Activated CD4-positive, alpha-beta T cell treated with anti-CD3 and anti-CD28 coated beads for 36 hours (primary cell): ENCODE measurements at regions of chr16 and their contacts with region 1.

Region 1: GRCh38 chr16:2980227-2981086 is at the start of gene PKMYT1:
- DNase-seq: peak; percentile 97
- ATAC-seq: peak; percentile 91
- H3K4me3 Mint-ChIP-seq: peak within 1 kb of the TSS; percentile 87
- H3K27ac Mint-ChIP-seq: peak within 1 kb of the TSS; percentile 84
- H3K4me1 Mint-ChIP-seq: peaks cover 6% of the 10 kb centered on the region
- H3K27me3 Mint-ChIP-seq: peaks cover 2% of the 10 kb centered on the region
- total RNA-seq, gene PKMYT1: 101 to 117 TPM

Region 2: DNA sequence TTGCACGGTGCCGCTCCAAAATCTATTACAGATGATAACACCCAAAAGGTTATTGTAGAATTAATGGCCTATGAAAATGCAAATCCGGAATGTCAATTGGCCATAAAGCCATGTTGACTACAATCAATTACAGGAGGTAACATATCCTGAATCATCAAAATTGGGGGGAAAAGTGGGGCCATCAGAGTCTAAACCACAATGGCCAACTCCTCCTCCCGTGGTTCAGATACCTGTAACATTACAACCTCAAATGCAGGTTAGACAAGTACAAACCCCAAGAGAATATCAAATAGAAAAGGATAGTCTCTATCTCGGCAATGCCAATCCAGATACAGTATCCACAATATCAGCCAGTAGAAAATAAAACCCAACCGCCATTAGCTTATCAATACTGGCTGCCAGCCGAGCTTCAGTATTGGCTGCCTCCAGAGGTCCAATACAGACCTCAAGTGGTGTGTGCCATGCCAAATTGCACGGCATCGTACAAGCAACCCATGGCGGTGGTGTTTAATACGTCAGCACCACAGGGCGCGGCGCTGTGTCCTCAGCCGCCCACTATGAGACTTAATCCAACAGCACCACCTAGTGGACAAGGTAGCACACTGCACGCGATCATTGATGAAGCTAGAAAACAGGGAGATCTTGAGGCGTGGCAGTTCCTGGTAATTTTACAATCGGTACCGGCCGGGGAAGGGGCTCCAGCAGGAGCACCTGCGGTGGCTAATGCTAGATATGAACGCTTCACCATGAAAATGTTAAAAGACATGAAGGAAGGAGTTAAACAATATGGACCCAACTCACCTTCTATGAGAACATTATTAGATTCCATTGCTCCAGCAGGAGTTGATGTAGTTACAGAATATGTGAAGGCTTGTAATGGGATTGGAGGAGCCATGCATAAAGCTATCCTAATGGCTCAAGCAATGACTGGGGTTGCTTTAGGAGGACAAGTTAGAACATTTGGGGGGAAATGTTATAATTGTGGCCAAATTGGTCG is 53.5 kb before region 1 on chr16:
- CTCF ChIA-PET with region 1: interaction called, 3 read pairs
- POLR2A ChIA-PET with region 1: no interaction called
- intact Hi-C with region 1: loop called in 1 of 2 experiments (anchors 1 kb)
- DNase-seq: peak; percentile 93
- ATAC-seq: peak; percentile 99
- H3K4me3 Mint-ChIP-seq: no peak overlapping the region
- H3K27ac Mint-ChIP-seq: no peak overlapping the region
- H3K4me1 Mint-ChIP-seq: peaks cover 11% of the 10 kb centered on the region
- H3K27me3 Mint-ChIP-seq: no peaks in the 10 kb centered on the region

Region 3: DNA sequence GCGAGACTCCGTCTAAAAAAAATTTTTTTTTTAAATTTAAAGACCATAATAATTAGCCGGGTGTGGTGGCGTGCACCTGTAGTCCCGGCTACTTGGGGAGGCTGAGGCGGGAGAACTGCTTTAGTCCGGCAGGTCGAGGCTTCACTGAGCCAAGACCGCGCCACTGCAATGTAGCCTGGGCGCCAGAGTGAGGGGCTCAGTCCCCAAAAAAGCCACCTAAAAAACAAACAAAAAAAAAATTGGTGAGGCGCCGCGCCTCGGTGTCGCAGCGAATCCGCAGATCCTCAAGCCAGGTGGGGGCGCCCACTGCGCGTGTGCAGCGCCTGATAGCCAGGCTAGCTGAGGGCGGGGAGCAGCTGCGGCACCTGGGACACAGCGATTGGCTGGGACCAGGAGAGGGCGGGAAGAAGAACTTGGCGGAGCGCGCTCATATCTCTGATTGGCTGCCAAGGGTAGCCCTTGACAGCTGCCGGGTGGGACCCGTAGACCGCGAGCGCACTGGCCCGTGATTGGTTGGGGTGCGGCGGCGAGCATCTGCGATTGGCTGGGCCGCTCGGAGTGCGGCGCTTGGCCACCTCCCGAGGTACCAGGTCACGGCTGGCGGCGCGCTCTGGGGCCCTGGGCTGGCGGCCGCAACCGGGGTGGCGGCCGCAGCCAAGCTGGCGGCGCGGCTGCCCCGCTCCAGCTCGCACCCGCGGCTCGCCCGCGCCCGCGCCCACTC is 23.3 kb after region 1 on chr16:
- CTCF ChIA-PET with region 1: interaction called, 3 read pairs
- POLR2A ChIA-PET with region 1: no interaction called
- intact Hi-C with region 1: loop called in 1 of 2 experiments (anchors 1 kb)
- DNase-seq: peak; percentile 99
- ATAC-seq: peak; percentile 100
- H3K4me3 Mint-ChIP-seq: peak overlapping the region; percentile 32
- H3K27ac Mint-ChIP-seq: no peak overlapping the region
- H3K4me1 Mint-ChIP-seq: peaks cover 23% of the 10 kb centered on the region
- H3K27me3 Mint-ChIP-seq: peaks cover 6% of the 10 kb centered on the region

Region 4: GRCh38 chr16:3106205-3106928 is 125.9 kb after region 1 on chr16:
- CTCF ChIA-PET with region 1: no interaction called
- POLR2A ChIA-PET with region 1: no interaction called
- intact Hi-C with region 1: loop called in 1 of 2 experiments (anchors 5 kb)
- DNase-seq: peak; percentile 96
- ATAC-seq: peak; percentile 88
- H3K4me3 Mint-ChIP-seq: peak overlapping the region; percentile 76
- H3K27ac Mint-ChIP-seq: peak overlapping the region; percentile 94
- H3K4me1 Mint-ChIP-seq: peaks cover 31% of the 10 kb centered on the region
- H3K27me3 Mint-ChIP-seq: no peaks in the 10 kb centered on the region